ENCODE measurements at regions of chr17 and their contacts with region 1.

Region 1: GRCh38 chr17:68961214-68961882 is 6.2 kb upstream of the ABCA8 start:
- ATAC-seq: peak in 4 of 8 experiments; percentile 51 to 98 (median 98)
- H3K4me3 ChIP-seq: no peak overlapping the region
- H3K27ac ChIP-seq: no peak overlapping the region
- H3K4me1 ChIP-seq: no peaks in the 10 kb centered on the region

Region 2: DNA sequence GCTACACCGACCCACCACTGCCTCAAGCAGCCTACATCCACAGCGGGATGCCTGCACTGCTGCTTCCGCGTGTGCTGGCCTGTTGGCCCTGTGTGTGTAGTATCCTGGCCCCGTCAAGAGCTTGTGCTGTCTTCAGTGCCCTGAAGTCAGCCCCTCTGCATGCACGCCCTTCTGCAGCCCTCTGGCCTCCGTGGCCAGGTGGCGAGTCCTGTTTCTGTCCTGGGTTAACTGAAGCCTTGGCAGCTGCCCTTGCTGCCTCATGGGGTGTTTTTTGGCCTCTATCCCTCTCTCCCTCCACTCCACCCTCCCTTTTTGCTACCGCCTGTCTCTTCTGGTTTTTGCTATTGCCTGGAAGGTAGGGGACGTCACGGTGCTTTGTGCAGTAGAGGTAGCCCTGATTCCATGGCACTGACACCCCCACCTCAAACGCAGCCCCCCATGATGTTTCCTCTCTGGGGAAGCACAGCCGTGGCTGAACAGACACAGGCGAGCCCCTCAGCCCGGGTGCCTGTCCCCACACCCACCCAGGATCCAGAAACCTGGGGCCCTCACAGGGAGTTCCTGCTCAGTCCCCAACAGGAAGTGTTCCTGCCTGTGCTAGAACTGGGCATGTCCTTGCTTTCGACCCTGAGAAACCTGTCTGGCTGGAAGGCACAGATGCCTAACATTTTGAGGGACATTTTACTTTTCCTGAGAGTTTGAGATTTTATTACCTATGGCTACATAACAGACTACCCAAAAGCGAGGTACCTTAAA is 732.4 kb before region 1 on chr17:
- in situ Hi-C with region 1: no loop called
- ATAC-seq: no peak
- H3K4me3 ChIP-seq: no peak overlapping the region
- H3K27ac ChIP-seq: no peak overlapping the region
- H3K4me1 ChIP-seq: no peaks in the 10 kb centered on the region

Region 3: DNA sequence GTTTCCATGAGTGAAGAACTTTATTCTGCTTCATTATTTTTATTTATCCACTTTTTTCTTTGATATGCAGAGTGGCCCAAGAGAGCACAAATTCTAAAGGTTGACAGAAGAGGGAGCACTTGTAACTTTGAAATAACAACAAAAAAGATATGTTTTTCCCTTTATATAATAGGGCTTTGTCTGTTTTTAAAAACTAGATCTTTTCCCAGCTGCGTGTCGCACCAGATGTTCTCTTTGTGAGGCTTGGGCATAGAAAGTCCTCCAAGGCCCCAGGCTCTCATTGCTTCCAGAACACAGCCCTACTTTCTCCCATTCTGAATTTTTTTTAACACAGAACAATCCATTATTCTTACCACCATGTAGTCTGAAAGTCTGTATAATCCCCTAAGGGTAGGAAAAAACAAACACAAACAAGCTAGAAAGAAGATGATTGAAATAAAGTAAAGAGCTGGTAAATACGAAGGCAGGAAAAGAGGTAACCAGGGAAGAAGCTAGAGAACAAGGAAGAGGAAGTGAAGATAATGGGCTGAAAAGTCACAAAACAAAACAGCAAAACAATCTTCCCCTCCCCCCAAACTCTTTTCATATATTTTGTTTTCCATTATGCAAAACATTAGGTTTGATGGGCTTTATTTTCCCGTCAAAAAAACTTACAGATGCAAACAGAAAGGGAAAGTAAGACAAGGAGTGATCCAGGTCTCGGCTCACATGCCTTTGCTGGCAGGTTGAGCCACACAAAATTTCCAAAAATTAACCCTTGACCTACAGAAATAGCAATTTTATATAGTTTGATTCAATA is 166.5 kb before region 1 on chr17:
- in situ Hi-C with region 1: loop called in 4 of 9 experiments (anchors 10 to 25 kb)
- ATAC-seq: peak in 3 of 8 experiments; percentile 39 to 73 (median 73)
- H3K4me3 ChIP-seq: no peak overlapping the region
- H3K27ac ChIP-seq: no peak overlapping the region
- H3K4me1 ChIP-seq: peaks cover 0 to 10% of the 10 kb centered on the region in 2 donors

Region 4: DNA sequence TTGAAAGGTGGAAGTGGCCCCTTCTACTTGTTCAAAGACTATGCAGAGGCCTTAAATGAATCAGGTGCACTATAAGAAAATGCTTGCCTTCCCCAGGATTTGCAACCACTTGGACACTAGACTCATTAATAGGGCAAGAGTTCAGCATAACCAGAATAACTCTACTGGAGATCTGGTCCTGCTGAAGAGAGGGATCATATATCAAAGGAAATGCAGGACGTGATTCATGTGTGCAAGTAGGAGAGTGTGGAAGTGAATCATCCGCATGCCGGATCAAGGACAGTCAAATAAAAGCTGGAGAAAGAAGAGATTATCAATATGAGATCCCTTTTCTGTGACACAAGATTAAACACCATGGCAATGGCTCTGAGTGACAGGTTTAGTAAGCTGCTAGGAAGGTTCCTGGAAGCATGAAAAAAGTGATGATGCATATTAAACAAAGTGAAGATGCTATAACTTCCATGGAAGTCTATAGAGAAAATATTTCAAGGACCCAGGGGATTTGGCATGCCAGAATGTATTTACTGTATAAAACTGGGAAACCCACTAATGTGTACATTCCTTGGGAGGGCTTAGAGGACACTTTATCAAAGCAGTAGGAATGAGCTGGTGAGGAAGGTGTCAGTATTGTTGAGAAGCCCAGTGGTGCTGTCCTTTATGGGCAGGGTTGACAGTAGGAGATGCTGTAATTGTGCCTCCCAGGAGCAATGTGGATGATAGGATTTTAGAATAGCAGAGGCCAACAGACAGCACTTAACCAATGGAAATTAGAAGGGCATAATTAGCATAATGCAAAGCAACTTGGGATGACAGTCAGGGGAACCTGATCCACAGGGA is 139.3 kb before region 1 on chr17:
- in situ Hi-C with region 1: no loop called
- ATAC-seq: peak; percentile 75 to 100 (median 92)
- H3K4me3 ChIP-seq: no peak overlapping the region
- H3K27ac ChIP-seq: no peak overlapping the region
- H3K4me1 ChIP-seq: peaks cover 8 to 11% of the 10 kb centered on the region in 2 donors

Measured in motor neuron (in vitro differentiated cells).